ENCODE measurements at regions of chr2 and their contacts with region 1.

Region 1: DNA sequence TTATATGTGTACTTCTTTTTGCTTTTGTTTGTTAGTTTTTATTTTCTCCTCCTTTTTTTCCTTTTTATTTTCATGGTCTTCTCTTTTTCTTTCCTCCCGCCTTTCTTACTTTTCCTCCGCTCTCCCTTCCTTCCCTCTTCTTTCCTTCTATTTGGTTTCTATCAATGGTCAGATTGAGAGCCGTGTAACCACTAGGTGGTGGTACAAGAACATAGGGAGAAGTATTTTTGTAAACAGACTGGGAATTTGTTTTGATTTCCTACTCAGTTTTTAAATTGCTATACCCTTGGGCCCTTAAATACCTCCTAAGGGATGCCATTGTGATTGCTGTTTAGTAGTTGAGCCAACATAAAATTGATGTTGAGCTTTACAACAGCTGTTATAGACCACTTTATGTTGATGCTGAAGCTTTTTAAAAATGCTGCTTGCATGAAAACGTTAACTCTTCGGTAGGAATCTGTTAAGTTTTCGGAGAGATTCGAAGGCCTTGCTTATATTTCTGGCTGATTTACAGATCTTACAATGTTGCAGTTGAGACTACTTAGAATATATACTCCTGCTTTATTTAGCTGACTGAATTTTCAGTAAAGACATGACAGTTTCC is 124.2 kb downstream of the UBE2E3 start:
- DNase-seq: no peak
- H3K4me3 Mint-ChIP-seq: no peak overlapping the region
- H3K27ac Mint-ChIP-seq: peak overlapping the region; percentile 49
- H3K4me1 Mint-ChIP-seq: peaks cover 50% of the 10 kb centered on the region
- H3K27me3 Mint-ChIP-seq: no peaks in the 10 kb centered on the region

Region 2: GRCh38 chr2:181142514-181142913 is 37.9 kb after region 1 on chr2:
- intact Hi-C with region 1: loop called (anchors 1 kb)
- DNase-seq: no peak
- H3K4me3 Mint-ChIP-seq: peak overlapping the region; percentile 84
- H3K27ac Mint-ChIP-seq: peak overlapping the region; percentile 95
- H3K4me1 Mint-ChIP-seq: peaks cover 70% of the 10 kb centered on the region
- H3K27me3 Mint-ChIP-seq: no peaks in the 10 kb centered on the region

Region 3: DNA sequence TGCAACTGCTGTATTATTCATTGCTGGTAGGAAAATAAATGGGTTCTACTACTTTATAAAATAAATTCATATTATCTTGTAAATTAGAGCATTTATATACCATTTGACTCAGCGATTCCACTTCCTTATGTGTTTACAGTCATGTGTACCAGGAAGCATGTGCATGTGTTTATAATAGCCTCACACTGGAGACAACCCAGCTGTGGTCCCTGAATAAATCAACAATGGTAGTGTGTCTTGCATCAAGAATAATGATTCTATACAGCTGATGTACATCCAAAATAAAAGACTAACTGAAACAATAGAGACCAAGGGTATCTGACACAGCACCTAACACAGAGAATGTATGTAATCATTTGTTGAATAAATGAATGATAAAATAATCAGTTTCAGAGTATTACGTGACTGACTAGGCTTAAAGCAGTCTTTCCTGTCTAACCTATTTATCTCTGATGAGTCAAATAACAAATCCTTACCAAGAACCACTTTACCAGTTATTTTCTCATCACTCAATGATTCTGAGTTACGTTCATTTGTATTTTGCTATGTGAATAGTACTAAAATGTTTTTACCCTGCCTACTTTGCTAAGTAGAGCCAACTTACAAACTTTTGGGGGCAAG is 92.6 kb after region 1 on chr2:
- intact Hi-C with region 1: loop called (anchors 1 kb)
- DNase-seq: no peak
- H3K4me3 Mint-ChIP-seq: peak overlapping the region; percentile 11
- H3K27ac Mint-ChIP-seq: peak overlapping the region; percentile 73
- H3K4me1 Mint-ChIP-seq: peaks cover 55% of the 10 kb centered on the region
- H3K27me3 Mint-ChIP-seq: no peaks in the 10 kb centered on the region

Region 4: DNA sequence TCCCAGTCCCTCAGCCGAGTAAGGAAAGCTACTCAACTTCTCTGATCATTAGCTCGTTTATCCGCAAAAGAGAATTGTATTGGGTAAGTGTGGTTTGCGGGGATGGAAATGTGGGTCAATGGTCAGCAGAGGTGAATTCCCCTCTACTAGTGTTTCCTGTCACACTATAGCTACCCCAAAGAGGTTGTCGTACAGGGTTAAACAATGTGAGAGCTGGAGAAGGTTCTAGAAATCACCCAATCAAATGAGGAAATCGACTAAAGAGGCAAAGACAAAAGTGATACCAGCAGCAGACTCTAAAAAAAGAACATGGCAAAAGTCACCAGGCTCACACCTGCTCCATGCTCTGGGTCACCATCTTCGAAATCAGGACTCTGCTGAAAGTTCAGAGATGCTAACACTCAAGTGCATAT is 207.9 kb after region 1 on chr2:
- intact Hi-C with region 1: loop called (anchors 1 kb)
- DNase-seq: peak; percentile 44
- H3K4me3 Mint-ChIP-seq: peak overlapping the region; percentile 84
- H3K27ac Mint-ChIP-seq: peak overlapping the region; percentile 99
- H3K4me1 Mint-ChIP-seq: peaks cover 60% of the 10 kb centered on the region
- H3K27me3 Mint-ChIP-seq: no peaks in the 10 kb centered on the region

Region 5: GRCh38 chr2:181466661-181467576 is 362.3 kb after region 1 on chr2:
- intact Hi-C with region 1: loop called (anchors 1 kb)
- DNase-seq: peak; percentile 56
- H3K4me3 Mint-ChIP-seq: no peak overlapping the region
- H3K27ac Mint-ChIP-seq: peak overlapping the region; percentile 30
- H3K4me1 Mint-ChIP-seq: peaks cover 87% of the 10 kb centered on the region
- H3K27me3 Mint-ChIP-seq: no peaks in the 10 kb centered on the region